PC-3 (cell line): ENCODE measurements at regions of chr18 and their contacts with region 1.

Region 1: GRCh38 chr18:44924785-44925499 is 244.3 kb downstream of the SETBP1 start:
- DNase-seq: no peak
- ATAC-seq: no peak
- H3K4me3 ChIP-seq: no peak overlapping the region
- H3K27ac ChIP-seq: no peak overlapping the region
- H3K4me1 ChIP-seq: peaks cover 7% of the 10 kb centered on the region
- H3K27me3 ChIP-seq: no peaks in the 10 kb centered on the region
- CTCF ChIP-seq: no peak

Region 2: GRCh38 chr18:44079606-44080005 is 845.3 kb before region 1 on chr18:
- CTCF ChIA-PET with region 1: no interaction called
- POLR2A ChIA-PET with region 1: no interaction called
- intact Hi-C with region 1: no loop called
- DNase-seq: peak; percentile 57
- ATAC-seq: peak; percentile 93
- H3K4me3 ChIP-seq: no peak overlapping the region
- H3K27ac ChIP-seq: peak overlapping the region; percentile 21; the same call in 1 of the 2 replicates
- H3K4me1 ChIP-seq: peaks cover 10% of the 10 kb centered on the region
- H3K27me3 ChIP-seq: no peaks in the 10 kb centered on the region
- CTCF ChIP-seq: no peak

Region 3: GRCh38 chr18:45106331-45106774 is 181.4 kb after region 1 on chr18:
- CTCF ChIA-PET with region 1: no interaction called
- POLR2A ChIA-PET with region 1: interaction called, 12 read pairs
- intact Hi-C with region 1: no loop called
- DNase-seq: peak; percentile 3
- ATAC-seq: no peak
- H3K4me3 ChIP-seq: no peak overlapping the region
- H3K27ac ChIP-seq: no peak overlapping the region
- H3K4me1 ChIP-seq: no peaks in the 10 kb centered on the region; the same call in 1 of the 2 replicates
- H3K27me3 ChIP-seq: no peaks in the 10 kb centered on the region
- CTCF ChIP-seq: no peak

Region 4: GRCh38 chr18:45449418-45450227 is 524.7 kb after region 1 on chr18:
- CTCF ChIA-PET with region 1: no interaction called
- POLR2A ChIA-PET with region 1: no interaction called
- intact Hi-C with region 1: no loop called
- DNase-seq: no peak
- ATAC-seq: no peak
- H3K4me3 ChIP-seq: no peak overlapping the region
- H3K27ac ChIP-seq: no peak overlapping the region
- H3K4me1 ChIP-seq: no peaks in the 10 kb centered on the region
- H3K27me3 ChIP-seq: no peaks in the 10 kb centered on the region
- CTCF ChIP-seq: no peak